ENCODE measurements at regions of chr16 and their contacts with region 1.

Region 1: GRCh38 chr16:22070361-22071330 is 21.7 kb upstream of the VWA3A start:
- DNase-seq: no peak
- ATAC-seq: peak; percentile 46

Region 2: GRCh38 chr16:21982108-21982507 is 88.5 kb before region 1 on chr16:
- intact Hi-C with region 1: no loop called
- DNase-seq: no peak
- ATAC-seq: no peak

Region 3: DNA sequence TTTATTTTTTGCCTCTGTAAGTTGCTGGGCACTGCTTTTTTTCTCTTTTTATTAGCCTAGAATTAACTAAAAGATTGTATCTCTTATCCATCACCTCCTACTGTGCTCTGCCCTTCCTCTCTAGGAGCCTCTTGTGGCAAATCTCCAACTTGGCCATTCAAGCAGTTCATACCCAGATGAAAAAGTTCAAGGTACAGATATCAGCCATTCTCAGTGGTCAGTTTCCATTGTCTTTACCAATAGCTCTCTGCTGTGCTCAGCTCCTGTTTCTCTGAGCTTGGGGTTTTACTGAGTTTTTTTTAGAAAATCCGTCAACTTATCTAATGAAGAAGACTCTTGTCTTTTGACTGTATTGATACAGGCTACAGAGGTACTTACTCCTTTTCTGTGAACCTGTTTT is 47.1 kb before region 1 on chr16:
- intact Hi-C with region 1: no loop called
- DNase-seq: no peak
- ATAC-seq: no peak

Region 4: DNA sequence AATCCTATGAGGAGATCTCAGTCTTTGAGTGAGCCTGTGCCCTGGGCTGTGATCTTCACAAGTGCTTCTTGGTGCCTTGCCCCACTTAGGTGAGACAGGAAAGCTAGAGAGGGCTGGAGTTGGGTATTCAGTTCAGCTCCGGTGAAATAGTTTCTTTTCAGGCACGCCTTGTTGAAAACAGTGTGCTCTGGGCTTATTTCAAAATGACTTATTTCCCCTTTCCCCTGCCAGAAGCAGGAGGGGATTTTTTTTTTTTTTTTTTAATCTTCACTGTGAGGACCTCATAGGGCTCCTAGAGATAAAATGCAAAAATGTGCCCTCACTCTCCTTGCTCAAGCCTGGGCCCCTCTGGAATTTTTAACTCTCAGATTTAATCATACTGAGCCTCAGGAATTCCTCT is 35.5 kb before region 1 on chr16:
- intact Hi-C with region 1: loop called (anchors 5 kb)
- DNase-seq: no peak
- ATAC-seq: no peak

Measured in Right ventricle myocardium inferior (tissue), 1 donor.